Colonic mucosa (tissue), 4 donors: ENCODE measurements at regions of chr15 and their contacts with region 1.

Region 1: GRCh38 chr15:72783563-72784237 is at the start of gene ADPGK:
- DNase-seq: peak; percentile 91
- H3K4me3 ChIP-seq: peak within 1 kb of the TSS; percentile 95
- H3K27ac ChIP-seq: peak within 1 kb of the TSS; percentile 87
- H3K4me1 ChIP-seq: peaks cover 10% of the 10 kb centered on the region
- H3K27me3 ChIP-seq: no peaks in the 10 kb centered on the region
- CTCF ChIP-seq: no peak
- total RNA-seq, gene ADPGK: 29.8 to 44.6 TPM

Region 2: GRCh38 chr15:73081321-73081958 is 297.7 kb after region 1 on chr15:
- intact Hi-C with region 1: loop called (anchors 5 kb)
- DNase-seq: peak; percentile 47
- H3K4me3 ChIP-seq: no peak overlapping the region
- H3K27ac ChIP-seq: no peak overlapping the region
- H3K4me1 ChIP-seq: peaks cover 12% of the 10 kb centered on the region
- H3K27me3 ChIP-seq: no peaks in the 10 kb centered on the region
- CTCF ChIP-seq: peak; percentile 58

Region 3: DNA sequence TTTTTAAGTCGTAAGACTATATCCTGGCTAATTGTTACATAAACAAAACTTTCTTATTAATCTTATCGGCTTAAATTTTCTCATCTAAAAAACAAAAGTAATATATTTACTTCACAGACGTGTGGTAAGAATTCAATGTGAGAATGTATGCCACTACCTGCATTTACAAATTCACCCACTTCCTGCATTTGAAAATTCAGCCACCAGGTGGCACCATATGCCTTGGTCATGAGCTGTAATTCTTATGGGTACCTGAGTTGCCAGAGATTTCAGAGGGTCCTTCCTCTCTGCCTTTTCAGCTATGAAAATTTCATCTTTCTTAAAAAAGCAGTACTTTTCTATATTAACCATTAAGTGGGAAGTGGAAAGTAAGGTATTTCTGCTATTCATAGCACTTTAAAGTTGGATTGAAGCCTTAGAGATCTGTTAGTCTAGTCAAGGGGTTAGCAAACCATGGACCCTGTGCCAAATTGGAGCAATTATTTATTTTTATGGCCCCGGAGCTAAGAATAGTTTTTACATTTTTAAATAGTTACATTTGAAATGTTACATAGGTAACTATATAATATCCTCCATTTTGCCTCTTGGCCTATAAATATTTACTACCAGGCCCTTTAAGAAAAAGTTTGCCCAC is 457.3 kb after region 1 on chr15:
- intact Hi-C with region 1: loop called (anchors 10 kb)
- DNase-seq: peak; percentile 82
- H3K4me3 ChIP-seq: no peak overlapping the region
- H3K27ac ChIP-seq: no peak overlapping the region
- H3K4me1 ChIP-seq: no peaks in the 10 kb centered on the region
- H3K27me3 ChIP-seq: no peaks in the 10 kb centered on the region
- CTCF ChIP-seq: peak; percentile 91